Activated CD4-positive, alpha-beta T cell treated with anti-CD3 and anti-CD28 coated beads for 36 hours (primary cell): ENCODE measurements at regions of chr1 and their contacts with region 1.

Region 1: GRCh38 chr1:93078986-93079654 is at the start of gene MTF2:
- DNase-seq: peak; percentile 97
- ATAC-seq: peak; percentile 91
- H3K4me3 Mint-ChIP-seq: peak within 1 kb of the TSS; percentile 94
- H3K27ac Mint-ChIP-seq: peak within 1 kb of the TSS; percentile 94
- H3K4me1 Mint-ChIP-seq: peaks cover 29% of the 10 kb centered on the region
- H3K27me3 Mint-ChIP-seq: no peaks in the 10 kb centered on the region
- total RNA-seq, gene MTF2: 49.8 to 55.0 TPM

Region 2: DNA sequence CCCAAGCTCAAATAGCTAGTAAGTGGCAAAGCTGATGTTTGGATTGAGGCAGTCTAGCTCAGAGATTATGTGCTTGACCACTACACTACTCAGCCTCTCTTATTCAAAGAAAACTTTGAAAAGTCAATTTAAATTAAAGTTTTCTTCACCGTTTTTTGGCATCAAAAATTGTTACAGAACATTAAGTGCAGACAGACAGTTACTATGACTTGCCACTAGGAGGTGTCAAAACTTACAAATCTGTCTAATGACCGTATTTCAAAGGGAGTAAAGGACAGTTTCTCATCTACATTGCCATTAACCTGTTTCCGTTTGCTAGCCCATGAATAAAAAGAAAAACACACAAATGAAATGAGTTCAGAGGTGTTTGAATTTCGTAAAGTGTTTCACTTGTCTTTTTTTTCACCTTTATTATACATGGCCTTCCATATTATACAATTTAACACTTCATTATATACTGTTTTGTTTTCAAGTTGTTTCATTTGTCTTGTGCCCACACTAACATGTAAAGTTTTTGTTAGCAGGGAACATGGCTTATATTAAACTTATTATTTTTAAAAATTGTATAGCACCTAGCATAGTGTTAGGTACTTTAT is 57.5 kb before region 1 on chr1:
- CTCF ChIA-PET with region 1: interaction called, 6 read pairs
- POLR2A ChIA-PET with region 1: no interaction called
- intact Hi-C with region 1: loop called in 1 of 2 experiments (anchors 5 kb)
- DNase-seq: no peak
- ATAC-seq: peak; percentile 72
- H3K4me3 Mint-ChIP-seq: no peak overlapping the region
- H3K27ac Mint-ChIP-seq: no peak overlapping the region
- H3K4me1 Mint-ChIP-seq: no peaks in the 10 kb centered on the region
- H3K27me3 Mint-ChIP-seq: peaks cover 3% of the 10 kb centered on the region

Region 3: GRCh38 chr1:93042187-93043056 is 36.7 kb before region 1 on chr1:
- CTCF ChIA-PET with region 1: interaction called, 5 read pairs
- POLR2A ChIA-PET with region 1: interaction called, 6 read pairs
- intact Hi-C with region 1: loop called (anchors 1 kb)
- DNase-seq: peak; percentile 20
- ATAC-seq: peak; percentile 98
- H3K4me3 Mint-ChIP-seq: peak overlapping the region; percentile 56
- H3K27ac Mint-ChIP-seq: peak overlapping the region; percentile 92
- H3K4me1 Mint-ChIP-seq: peaks cover 30% of the 10 kb centered on the region
- H3K27me3 Mint-ChIP-seq: no peaks in the 10 kb centered on the region

Region 4: GRCh38 chr1:93093332-93094006 is 14.3 kb after region 1 on chr1:
- CTCF ChIA-PET with region 1: interaction called, 14 read pairs
- POLR2A ChIA-PET with region 1: interaction called, 3 read pairs
- intact Hi-C with region 1: no loop called
- DNase-seq: no peak
- ATAC-seq: no peak
- H3K4me3 Mint-ChIP-seq: no peak overlapping the region
- H3K27ac Mint-ChIP-seq: no peak overlapping the region
- H3K4me1 Mint-ChIP-seq: peaks cover 47% of the 10 kb centered on the region
- H3K27me3 Mint-ChIP-seq: no peaks in the 10 kb centered on the region

Region 5: DNA sequence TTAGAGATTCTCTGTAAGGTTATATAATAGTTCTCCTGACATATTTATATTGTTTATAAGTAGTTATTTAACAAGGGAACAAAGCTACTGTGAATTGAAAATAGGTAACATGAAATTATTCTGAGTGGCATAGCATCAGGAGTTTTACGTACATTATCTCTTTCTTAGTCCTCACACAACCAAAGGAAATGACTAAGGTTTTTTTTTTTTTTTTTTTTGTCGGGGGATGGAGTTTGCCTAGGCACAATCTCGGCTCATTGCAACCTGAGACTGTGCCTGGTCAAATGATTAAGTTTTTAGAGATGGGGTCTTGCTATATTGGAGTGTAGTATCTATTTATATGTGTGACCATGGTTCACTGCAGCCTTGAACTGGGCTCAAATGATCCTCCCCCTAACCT is 76.2 kb after region 1 on chr1:
- CTCF ChIA-PET with region 1: interaction called, 6 read pairs
- POLR2A ChIA-PET with region 1: no interaction called
- intact Hi-C with region 1: loop called in 1 of 2 experiments (anchors 2 kb)
- DNase-seq: no peak
- ATAC-seq: peak; percentile 78
- H3K4me3 Mint-ChIP-seq: no peak overlapping the region
- H3K27ac Mint-ChIP-seq: peak overlapping the region; percentile 47
- H3K4me1 Mint-ChIP-seq: peaks cover 25% of the 10 kb centered on the region
- H3K27me3 Mint-ChIP-seq: no peaks in the 10 kb centered on the region

Region 6: GRCh38 chr1:93447516-93448291 is 368.6 kb after region 1 on chr1 and contains the start of gene FNBP1L:
- CTCF ChIA-PET with region 1: interaction called, 4 read pairs
- POLR2A ChIA-PET with region 1: no interaction called
- intact Hi-C with region 1: loop called in 1 of 2 experiments (anchors 5 kb)
- DNase-seq: peak; percentile 81
- ATAC-seq: peak; percentile 87
- H3K4me3 Mint-ChIP-seq: peak within 1 kb of the TSS; percentile 83
- H3K27ac Mint-ChIP-seq: peak within 1 kb of the TSS; percentile 72
- H3K4me1 Mint-ChIP-seq: peaks cover 15% of the 10 kb centered on the region
- H3K27me3 Mint-ChIP-seq: peaks cover 24% of the 10 kb centered on the region
- total RNA-seq, gene FNBP1L: 1.2 to 1.4 TPM

Region 7: GRCh38 chr1:93615582-93616150 is 536.5 kb after region 1 on chr1:
- CTCF ChIA-PET with region 1: interaction called, 4 read pairs
- POLR2A ChIA-PET with region 1: no interaction called
- intact Hi-C with region 1: loop called in 1 of 2 experiments (anchors 5 kb)
- DNase-seq: peak; percentile 80
- ATAC-seq: peak; percentile 86
- H3K4me3 Mint-ChIP-seq: peak overlapping the region; percentile 15
- H3K27ac Mint-ChIP-seq: peak overlapping the region; percentile 86
- H3K4me1 Mint-ChIP-seq: peaks cover 22% of the 10 kb centered on the region
- H3K27me3 Mint-ChIP-seq: peaks cover 6% of the 10 kb centered on the region